ENCODE measurements at regions of chr9 and their contacts with region 1.

Region 1: GRCh38 chr9:87684627-87685219 is 41.2 kb upstream of the CTSL start:
- DNase-seq: peak in 2 of 3 donors; percentile 63 to 73
- ATAC-seq: no peak
- H3K4me3 ChIP-seq: no peak overlapping the region
- H3K27ac ChIP-seq: no peak overlapping the region
- H3K4me1 ChIP-seq: no peaks in the 10 kb centered on the region
- H3K27me3 ChIP-seq: no peaks in the 10 kb centered on the region

Region 2: GRCh38 chr9:87824216-87824875 is 139.6 kb after region 1 on chr9:
- intact Hi-C with region 1: no loop called
- DNase-seq: no peak
- ATAC-seq: no peak
- H3K4me3 ChIP-seq: no peak overlapping the region
- H3K27ac ChIP-seq: no peak overlapping the region
- H3K4me1 ChIP-seq: no peaks in the 10 kb centered on the region
- H3K27me3 ChIP-seq: no peaks in the 10 kb centered on the region

Region 3: GRCh38 chr9:88025399-88026117 is 340.8 kb after region 1 on chr9:
- intact Hi-C with region 1: no loop called
- DNase-seq: no peak
- ATAC-seq: no peak
- H3K4me3 ChIP-seq: no peak overlapping the region
- H3K27ac ChIP-seq: no peak overlapping the region
- H3K4me1 ChIP-seq: no peaks in the 10 kb centered on the region
- H3K27me3 ChIP-seq: no peaks in the 10 kb centered on the region

Region 4: DNA sequence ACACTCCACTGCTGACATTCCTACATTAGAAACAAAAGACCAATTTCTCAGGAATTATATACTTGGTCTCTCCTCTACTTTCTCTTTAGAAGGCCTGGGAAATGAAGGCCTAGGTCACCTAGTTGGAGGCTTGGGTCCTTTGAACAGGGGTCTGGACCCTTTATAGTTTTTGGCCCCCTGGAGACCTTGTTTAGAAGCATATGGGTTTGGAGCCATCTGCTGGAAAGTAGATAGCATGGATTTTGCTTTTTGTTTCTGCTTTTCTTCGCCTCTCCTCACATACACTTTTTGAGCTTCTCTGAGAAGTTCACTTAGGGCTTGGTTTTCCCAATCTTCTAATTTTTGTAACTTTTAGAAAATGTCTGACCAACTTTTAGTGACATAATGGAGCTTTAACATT is 356.7 kb after region 1 on chr9:
- intact Hi-C with region 1: loop called (anchors 5 to 10 kb)
- DNase-seq: no peak
- ATAC-seq: no peak
- H3K4me3 ChIP-seq: no peak overlapping the region
- H3K27ac ChIP-seq: no peak overlapping the region
- H3K4me1 ChIP-seq: no peaks in the 10 kb centered on the region
- H3K27me3 ChIP-seq: no peaks in the 10 kb centered on the region

Measured in right cardiac atrium (tissue), 5 donors.